ENCODE measurements at regions of chr16 and their contacts with region 1.

Region 1: GRCh38 chr16:87492721-87493607 is at the start of gene ZCCHC14:
- DNase-seq: peak; percentile 99
- ATAC-seq: peak; percentile 93
- H3K4me3 Mint-ChIP-seq: peak within 1 kb of the TSS; percentile 81
- H3K27ac Mint-ChIP-seq: peak within 1 kb of the TSS; percentile 82
- H3K4me1 Mint-ChIP-seq: peaks cover 47% of the 10 kb centered on the region
- H3K27me3 Mint-ChIP-seq: peaks cover 7% of the 10 kb centered on the region
- CTCF ChIP-seq: no peak
- total RNA-seq, gene ZCCHC14: 4.6 to 5.9 TPM

Region 2: DNA sequence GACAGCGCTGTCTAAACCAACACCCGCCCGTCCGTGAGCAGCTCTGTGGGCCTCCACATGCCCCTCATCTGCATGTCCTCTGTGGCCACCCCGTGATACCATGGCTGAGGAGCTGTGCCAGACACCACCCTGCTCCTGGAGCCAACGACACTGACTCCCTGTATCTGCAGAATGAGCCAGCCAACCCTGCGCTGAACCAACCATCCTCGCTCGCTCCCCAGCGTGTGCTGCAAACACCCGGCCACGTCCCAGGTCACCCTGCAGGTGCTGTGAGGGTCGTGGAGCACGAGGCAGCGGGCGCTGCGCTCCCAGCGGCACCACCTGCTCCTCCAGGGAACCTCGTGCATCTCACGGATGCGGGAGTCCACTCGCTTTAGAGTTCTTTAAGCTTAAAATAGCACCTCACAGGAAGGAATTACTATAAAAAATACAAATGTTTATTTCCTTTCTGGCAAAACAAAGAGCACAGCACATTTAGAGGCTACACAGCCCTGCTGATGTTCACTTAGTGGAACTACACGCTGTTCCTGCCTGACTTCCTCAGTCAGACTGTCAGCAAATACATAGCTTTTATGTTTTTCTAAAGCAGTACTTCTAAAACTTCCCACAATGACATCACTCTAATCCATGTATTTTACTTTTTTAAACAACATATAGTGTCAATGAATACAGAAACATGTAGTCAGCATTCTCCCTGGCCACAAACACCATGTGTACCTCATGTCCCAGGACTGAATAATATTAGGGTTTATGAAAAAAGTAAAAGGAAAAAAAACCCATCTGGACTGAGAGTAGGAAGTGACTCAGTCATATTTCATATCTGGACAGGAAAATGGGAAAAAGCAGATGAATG is 57.4 kb before region 1 on chr16:
- CTCF ChIA-PET with region 1: no interaction called
- POLR2A ChIA-PET with region 1: interaction called, 4 read pairs
- intact Hi-C with region 1: loop called (anchors 10 kb)
- DNase-seq: no peak
- ATAC-seq: no peak
- H3K4me3 Mint-ChIP-seq: peak overlapping the region; percentile 29
- H3K27ac Mint-ChIP-seq: no peak overlapping the region
- H3K4me1 Mint-ChIP-seq: peaks cover 21% of the 10 kb centered on the region
- H3K27me3 Mint-ChIP-seq: no peaks in the 10 kb centered on the region
- CTCF ChIP-seq: no peak

Region 3: DNA sequence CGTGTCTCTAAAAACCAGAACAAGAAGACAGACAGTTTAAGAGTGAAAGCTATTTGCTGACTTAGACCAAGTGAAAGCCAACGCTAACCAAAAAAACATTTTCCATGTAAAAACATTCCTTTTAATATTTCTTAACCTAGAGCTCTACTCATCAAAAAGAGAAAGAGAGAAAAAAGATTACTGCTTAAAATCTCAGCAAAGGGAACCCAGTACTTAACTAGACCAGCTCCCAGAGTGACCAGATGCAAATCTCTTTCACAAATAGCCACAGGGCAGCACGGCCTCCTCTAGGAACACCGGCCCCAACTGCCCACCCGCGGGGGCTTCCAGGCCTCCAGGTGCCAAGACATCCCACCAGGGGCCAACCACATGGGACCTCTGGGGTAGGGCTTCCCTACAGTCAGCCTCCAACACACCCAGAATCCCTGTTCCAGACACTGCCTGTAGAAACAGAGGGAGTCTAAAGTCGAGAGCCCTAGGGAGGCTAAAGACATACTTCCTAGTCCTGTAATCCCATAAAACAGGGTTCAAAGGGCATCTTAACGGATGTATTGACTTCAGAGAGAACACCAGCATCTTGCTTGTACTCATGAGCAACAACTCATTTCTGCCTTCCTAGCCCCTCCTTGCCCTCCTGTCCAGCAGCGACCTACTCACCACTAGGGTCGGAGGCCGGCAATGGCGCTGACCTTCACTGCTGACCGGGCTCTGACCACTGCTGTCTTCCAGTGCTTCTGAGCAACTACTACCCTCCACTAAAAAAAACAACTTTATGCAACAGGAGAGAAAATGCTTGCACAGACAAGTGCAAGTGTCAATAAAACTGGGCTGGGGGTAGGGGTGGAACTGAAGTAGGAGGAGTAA is 21.5 kb before region 1 on chr16:
- CTCF ChIA-PET with region 1: no interaction called
- POLR2A ChIA-PET with region 1: no interaction called
- intact Hi-C with region 1: no loop called
- DNase-seq: no peak
- ATAC-seq: no peak
- H3K4me3 Mint-ChIP-seq: no peak overlapping the region
- H3K27ac Mint-ChIP-seq: no peak overlapping the region
- H3K4me1 Mint-ChIP-seq: peaks cover 30% of the 10 kb centered on the region
- H3K27me3 Mint-ChIP-seq: no peaks in the 10 kb centered on the region
- CTCF ChIP-seq: no peak